ENCODE measurements at regions of chr6 and their contacts with region 1.

Region 1: DNA sequence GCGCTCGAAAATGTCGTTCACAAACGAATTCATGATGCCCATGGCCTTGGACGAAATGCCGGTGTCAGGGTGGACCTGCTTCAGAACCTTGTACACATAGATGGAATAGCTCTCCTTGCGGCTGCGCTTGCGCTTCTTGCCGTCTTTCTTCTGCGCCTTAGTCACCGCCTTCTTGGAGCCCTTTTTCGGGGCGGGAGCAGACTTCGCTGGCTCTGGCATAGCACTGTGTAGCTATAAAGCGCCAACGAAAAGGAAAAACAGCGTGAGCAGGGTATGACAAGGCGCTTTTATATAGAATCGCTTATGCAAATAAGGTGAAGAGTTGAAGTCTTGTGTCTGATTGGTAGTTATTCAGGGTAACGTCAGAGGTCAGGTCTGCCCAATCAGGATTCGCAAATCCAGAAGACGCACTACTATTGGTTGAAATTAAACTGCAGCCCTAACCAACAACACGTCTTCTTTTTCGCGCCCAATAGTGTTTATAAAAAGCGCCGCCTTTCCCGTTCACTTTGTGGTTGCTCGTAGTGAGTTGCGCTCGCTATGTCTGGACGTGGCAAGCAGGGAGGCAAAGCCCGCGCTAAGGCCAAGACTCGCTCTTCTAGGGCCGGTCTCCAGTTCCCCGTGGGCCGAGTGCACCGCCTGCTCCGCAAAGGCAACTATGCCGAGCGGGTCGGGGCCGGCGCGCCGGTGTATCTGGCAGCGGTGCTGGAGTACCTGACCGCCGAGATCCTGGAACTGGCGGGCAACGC is 114.8 kb upstream of the PRSS16 start:
- DNase-seq: no peak
- ATAC-seq: peak; percentile 84
- H3K4me3 ChIP-seq: peak overlapping the region; percentile 70 to 81 (median 74)
- H3K4me3 Mint-ChIP-seq: no peak overlapping the region
- H3K27ac ChIP-seq: peak overlapping the region; percentile 83
- H3K27ac Mint-ChIP-seq: no peak overlapping the region
- H3K4me1 ChIP-seq: peaks cover 14 to 24% of the 10 kb centered on the region in 2 donors
- H3K4me1 Mint-ChIP-seq: peaks cover 23% of the 10 kb centered on the region
- H3K27me3 ChIP-seq: no peaks in the 10 kb centered on the region
- H3K27me3 Mint-ChIP-seq: no peaks in the 10 kb centered on the region
- CTCF ChIP-seq: no peak

Region 2: DNA sequence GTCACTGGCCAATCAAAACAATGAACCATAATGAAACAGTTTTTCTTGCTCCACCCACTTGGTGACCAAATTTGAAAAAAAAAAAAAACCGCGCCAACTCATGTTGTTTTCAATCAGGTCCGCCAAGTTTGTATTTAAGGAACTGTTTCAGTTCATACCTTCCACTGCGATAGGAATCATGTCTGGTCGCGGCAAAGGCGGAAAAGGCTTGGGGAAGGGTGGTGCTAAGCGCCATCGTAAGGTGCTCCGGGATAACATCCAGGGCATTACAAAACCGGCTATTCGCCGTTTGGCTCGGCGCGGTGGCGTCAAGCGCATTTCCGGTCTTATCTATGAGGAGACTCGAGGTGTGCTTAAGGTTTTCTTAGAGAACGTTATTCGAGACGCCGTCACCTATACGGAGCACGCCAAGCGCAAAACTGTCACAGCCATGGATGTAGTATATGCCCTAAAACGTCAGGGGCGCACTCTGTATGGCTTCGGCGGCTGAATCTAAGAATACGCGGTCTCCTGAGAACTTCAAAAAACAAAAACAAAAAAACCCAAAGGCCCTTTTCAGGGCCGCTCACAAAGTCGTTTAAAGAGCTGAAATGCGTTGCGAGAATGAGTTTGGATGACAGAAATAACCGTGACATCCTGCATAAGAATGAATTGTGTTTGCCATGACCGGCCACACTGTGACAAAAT is 1028.8 kb before region 1 on chr6:
- CTCF ChIA-PET with region 1: no interaction called
- POLR2A ChIA-PET with region 1: no interaction called
- intact Hi-C with region 1: loop called (anchors 1 kb)
- DNase-seq: peak; percentile 98
- ATAC-seq: peak; percentile 87
- H3K4me3 ChIP-seq: peak overlapping the region; percentile 52 to 81 (median 62)
- H3K4me3 Mint-ChIP-seq: peak overlapping the region; percentile 88
- H3K27ac ChIP-seq: peak overlapping the region; percentile 78 to 79
- H3K27ac Mint-ChIP-seq: peak overlapping the region; percentile 99
- H3K4me1 ChIP-seq: peaks cover 5 to 15% of the 10 kb centered on the region in 2 donors
- H3K4me1 Mint-ChIP-seq: peaks cover 15% of the 10 kb centered on the region
- H3K27me3 ChIP-seq: no peaks in the 10 kb centered on the region
- H3K27me3 Mint-ChIP-seq: no peaks in the 10 kb centered on the region
- CTCF ChIP-seq: peak; percentile 66

Region 3: GRCh38 chr6:26270903-26271667 is 861.6 kb before region 1 on chr6:
- CTCF ChIA-PET with region 1: no interaction called
- POLR2A ChIA-PET with region 1: interaction called, 11 read pairs
- intact Hi-C with region 1: no loop called
- DNase-seq: peak; percentile 90
- ATAC-seq: peak; percentile 19
- H3K4me3 ChIP-seq: peak overlapping the region; percentile 63 to 88 (median 75)
- H3K4me3 Mint-ChIP-seq: no peak overlapping the region
- H3K27ac ChIP-seq: peak overlapping the region; percentile 79 to 86
- H3K27ac Mint-ChIP-seq: no peak overlapping the region
- H3K4me1 ChIP-seq: peaks cover 15 to 37% of the 10 kb centered on the region in 2 donors
- H3K4me1 Mint-ChIP-seq: peaks cover 20% of the 10 kb centered on the region
- H3K27me3 ChIP-seq: no peaks in the 10 kb centered on the region
- H3K27me3 Mint-ChIP-seq: no peaks in the 10 kb centered on the region
- CTCF ChIP-seq: no peak

Region 4: DNA sequence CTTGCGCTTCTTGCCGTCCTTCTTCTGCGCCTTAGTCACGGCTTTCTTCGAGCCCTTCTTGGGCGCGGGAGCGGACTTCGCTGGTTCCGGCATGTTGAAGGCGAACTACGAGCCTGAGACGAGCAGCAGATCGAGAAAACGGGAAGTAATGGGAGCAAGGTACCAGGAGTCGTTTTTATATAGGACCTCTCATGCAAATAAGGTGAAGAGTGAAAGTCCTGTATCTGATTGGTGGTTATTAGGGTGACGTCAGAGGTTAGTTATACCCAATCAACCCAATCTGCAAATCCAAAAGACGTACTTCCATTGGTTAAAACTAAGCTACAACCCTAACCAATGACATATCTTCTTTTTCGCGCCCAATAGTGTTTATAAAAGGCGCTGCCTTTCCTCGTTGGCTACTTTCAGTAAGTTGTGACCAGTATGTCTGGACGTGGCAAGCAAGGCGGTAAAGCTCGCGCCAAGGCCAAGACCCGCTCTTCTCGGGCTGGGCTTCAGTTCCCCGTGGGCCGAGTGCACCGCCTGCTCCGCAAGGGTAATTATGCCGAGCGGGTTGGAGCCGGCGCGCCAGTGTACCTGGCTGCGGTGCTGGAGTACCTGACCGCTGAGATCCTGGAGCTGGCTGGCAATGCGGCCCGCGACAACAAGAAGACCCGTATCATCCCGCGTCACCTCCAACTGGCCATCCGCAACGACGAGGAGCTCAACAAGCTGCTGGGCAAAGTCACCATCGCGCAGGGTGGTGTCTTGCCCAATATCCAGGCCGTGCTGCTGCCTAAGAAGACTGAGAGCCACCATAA is 14.2 kb after region 1 on chr6:
- CTCF ChIA-PET with region 1: interaction called, 31 read pairs
- POLR2A ChIA-PET with region 1: interaction called, 266 read pairs
- intact Hi-C with region 1: loop called (anchors 1 kb)
- DNase-seq: peak; percentile 98
- ATAC-seq: peak; percentile 85
- H3K4me3 ChIP-seq: peak overlapping the region; percentile 72 to 100 (median 88)
- H3K4me3 Mint-ChIP-seq: no peak overlapping the region
- H3K27ac ChIP-seq: peak overlapping the region; percentile 76 to 92
- H3K27ac Mint-ChIP-seq: no peak overlapping the region
- H3K4me1 ChIP-seq: peaks cover 20 to 26% of the 10 kb centered on the region in 2 donors
- H3K4me1 Mint-ChIP-seq: peaks cover 17% of the 10 kb centered on the region
- H3K27me3 ChIP-seq: no peaks in the 10 kb centered on the region
- H3K27me3 Mint-ChIP-seq: no peaks in the 10 kb centered on the region
- CTCF ChIP-seq: no peak

Region 5: GRCh38 chr6:27753668-27754407 is 621.1 kb after region 1 on chr6:
- CTCF ChIA-PET with region 1: interaction called, 5 read pairs
- POLR2A ChIA-PET with region 1: no interaction called
- intact Hi-C with region 1: loop called (anchors 2 kb)
- DNase-seq: peak; percentile 82
- ATAC-seq: peak; percentile 48
- H3K4me3 ChIP-seq: peak overlapping the region; percentile 42 to 73 (median 63)
- H3K4me3 Mint-ChIP-seq: peak overlapping the region; percentile 91
- H3K27ac ChIP-seq: no peak overlapping the region
- H3K27ac Mint-ChIP-seq: peak overlapping the region; percentile 91
- H3K4me1 ChIP-seq: peaks cover 22 to 25% of the 10 kb centered on the region in 2 donors
- H3K4me1 Mint-ChIP-seq: peaks cover 30% of the 10 kb centered on the region
- H3K27me3 ChIP-seq: peaks cover 0 to 26% (median 5%) of the 10 kb centered on the region in 4 experiments
- H3K27me3 Mint-ChIP-seq: peaks cover 6% of the 10 kb centered on the region
- CTCF ChIP-seq: no peak

Region 6: GRCh38 chr6:28080631-28081485 is 948.2 kb after region 1 on chr6:
- CTCF ChIA-PET with region 1: no interaction called
- POLR2A ChIA-PET with region 1: no interaction called
- intact Hi-C with region 1: loop called (anchors 5 kb)
- DNase-seq: peak; percentile 98
- ATAC-seq: peak; percentile 67
- H3K4me3 ChIP-seq: peak overlapping the region; percentile 67 to 96 (median 88)
- H3K4me3 Mint-ChIP-seq: peak overlapping the region; percentile 92
- H3K27ac ChIP-seq: peak overlapping the region; percentile 94 to 100
- H3K27ac Mint-ChIP-seq: peak overlapping the region; percentile 98
- H3K4me1 ChIP-seq: peaks cover 10 to 22% of the 10 kb centered on the region in 2 donors
- H3K4me1 Mint-ChIP-seq: peaks cover 36% of the 10 kb centered on the region
- H3K27me3 ChIP-seq: no peaks in the 10 kb centered on the region
- H3K27me3 Mint-ChIP-seq: no peaks in the 10 kb centered on the region
- CTCF ChIP-seq: no peak